ENCODE measurements at regions of chr7 and their contacts with region 1.

Region 1: GRCh38 chr7:99997545-99998137 is 17.8 kb upstream of the ZKSCAN1 start:
- DNase-seq: peak; percentile 69
- ATAC-seq: peak; percentile 76

Region 2: DNA sequence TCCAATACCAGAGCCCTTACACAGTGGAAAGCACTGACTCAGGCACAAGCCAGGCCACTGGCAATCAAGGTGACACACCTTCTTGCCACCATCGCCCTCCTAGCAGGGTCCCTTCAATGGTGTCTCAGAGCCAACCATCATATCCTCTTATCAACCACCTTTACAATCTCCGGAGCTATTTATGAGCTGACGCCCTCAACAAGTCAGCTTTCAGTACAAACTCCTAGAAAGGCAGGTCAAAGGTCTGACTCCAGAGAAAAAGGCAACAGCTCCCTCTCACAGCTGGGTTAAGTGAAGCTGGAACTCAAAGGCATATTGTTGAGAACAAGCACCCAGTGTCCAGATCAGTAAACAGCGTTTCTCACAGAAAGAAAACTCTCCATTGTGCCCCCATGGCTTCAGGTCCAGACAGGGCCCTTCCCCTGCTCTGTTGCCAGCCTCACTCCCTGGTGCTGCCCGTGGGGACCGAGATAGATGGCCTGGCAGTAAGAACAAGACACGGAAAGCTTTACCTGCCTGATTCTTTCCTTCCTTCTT is 81.5 kb after region 1 on chr7:
- intact Hi-C with region 1: loop called (anchors 10 kb)
- DNase-seq: no peak
- ATAC-seq: no peak

Measured in sciatic nerve (tissue), 2 donors.